ENCODE measurements at regions of chr1 and their contacts with region 1.

Region 1: GRCh38 chr1:85356130-85356529 is 79.7 kb upstream of the BCL10 start:
- DNase-seq: no peak
- ATAC-seq: no peak
- H3K4me3 Mint-ChIP-seq: no peak overlapping the region
- H3K27ac Mint-ChIP-seq: no peak overlapping the region
- H3K4me1 Mint-ChIP-seq: no peaks in the 10 kb centered on the region
- H3K27me3 Mint-ChIP-seq: peaks cover 2% of the 10 kb centered on the region

Region 2: GRCh38 chr1:85339089-85339488 is 17.0 kb before region 1 on chr1:
- CTCF ChIA-PET with region 1: no interaction called
- POLR2A ChIA-PET with region 1: no interaction called
- intact Hi-C with region 1: loop called in 1 of 2 experiments (anchors 1 kb)
- DNase-seq: no peak
- ATAC-seq: no peak
- H3K4me3 Mint-ChIP-seq: no peak overlapping the region
- H3K27ac Mint-ChIP-seq: no peak overlapping the region
- H3K4me1 Mint-ChIP-seq: peaks cover 6% of the 10 kb centered on the region
- H3K27me3 Mint-ChIP-seq: peaks cover 17% of the 10 kb centered on the region

Region 3: DNA sequence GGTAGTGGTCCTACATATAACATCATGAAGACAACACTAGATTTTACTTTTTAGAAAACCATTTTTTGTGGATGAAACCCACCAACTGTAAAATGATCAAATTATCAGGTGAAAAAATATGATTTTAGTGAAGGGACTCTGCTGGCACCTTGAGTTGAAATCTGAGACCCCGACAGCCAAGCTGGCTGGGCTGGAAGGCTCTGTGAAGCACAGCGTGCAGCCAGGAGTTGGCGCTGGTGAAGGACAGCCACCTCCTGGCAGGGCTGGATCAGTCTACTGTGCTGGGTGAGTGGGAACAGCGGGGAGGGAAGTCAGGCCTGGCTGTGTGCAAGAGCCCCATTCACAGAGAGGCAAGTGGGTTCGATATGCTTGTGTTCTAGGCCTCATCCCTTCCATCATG is 60.9 kb after region 1 on chr1:
- CTCF ChIA-PET with region 1: no interaction called
- POLR2A ChIA-PET with region 1: no interaction called
- intact Hi-C with region 1: no loop called
- DNase-seq: no peak
- ATAC-seq: no peak
- H3K4me3 Mint-ChIP-seq: no peak overlapping the region
- H3K27ac Mint-ChIP-seq: no peak overlapping the region
- H3K4me1 Mint-ChIP-seq: no peaks in the 10 kb centered on the region
- H3K27me3 Mint-ChIP-seq: peaks cover 4% of the 10 kb centered on the region